ENCODE measurements at regions of chr7 and their contacts with region 1.

Region 1: DNA sequence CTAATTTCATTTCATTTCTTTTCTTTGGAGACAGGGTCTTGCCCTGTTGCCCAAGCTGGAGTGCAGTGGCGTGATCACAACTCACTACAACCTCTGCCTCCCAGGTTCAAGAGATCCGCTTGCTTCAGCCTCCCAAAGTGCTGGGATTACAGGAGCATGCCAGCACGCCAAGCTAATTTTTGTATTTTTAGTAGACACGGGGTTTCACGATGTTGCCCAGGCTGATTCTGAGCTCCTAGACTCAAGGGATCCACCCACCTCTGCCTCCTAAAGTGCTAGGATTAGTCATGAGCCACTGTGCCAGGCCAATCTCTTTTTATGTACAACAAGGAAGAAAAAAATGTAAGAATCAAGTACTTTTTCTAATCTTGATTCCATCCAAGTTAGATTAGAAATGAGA is 10.7 kb upstream of the KMT2E start:
- DNase-seq: no peak

Region 2: GRCh38 chr7:105013221-105013815 is 10.0 kb after region 1 on chr7:
- intact Hi-C with region 1: loop called in 1 of 2 experiments (anchors 1 kb)
- DNase-seq: peak; percentile 98

Region 3: DNA sequence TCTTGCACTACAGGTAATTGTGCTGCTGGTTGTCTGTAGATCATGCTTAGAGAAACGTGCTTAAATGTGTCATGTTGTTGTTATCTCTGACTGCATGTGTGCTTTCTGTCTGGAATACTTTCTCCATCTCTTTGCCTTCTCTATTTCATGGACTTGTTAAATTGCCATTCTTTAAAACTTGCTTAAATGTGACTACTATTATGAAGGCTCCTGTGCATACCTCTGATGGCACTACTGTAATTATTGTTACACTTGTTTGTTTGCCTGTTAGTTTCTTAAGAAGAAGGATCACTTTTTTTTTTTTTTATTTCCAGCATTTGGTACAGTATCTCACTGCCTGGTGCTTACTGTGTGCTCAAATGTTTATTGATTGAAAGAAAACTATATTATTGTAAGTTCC is 52.3 kb after region 1 on chr7:
- intact Hi-C with region 1: no loop called
- DNase-seq: no peak

Region 4: GRCh38 chr7:105098863-105099515 is 95.7 kb after region 1 on chr7:
- intact Hi-C with region 1: no loop called
- DNase-seq: no peak

Region 5: GRCh38 chr7:105352018-105352612 is 348.8 kb after region 1 on chr7:
- intact Hi-C with region 1: no loop called
- DNase-seq: peak; percentile 94

Measured in posterior vena cava (tissue), 2 donors.